Activated naive CD4-positive, alpha-beta T cell treated with anti-CD3 and anti-CD28 coated beads for 36 hours (primary cell): ENCODE measurements at regions of chrX and their contacts with region 1.

Region 1: DNA sequence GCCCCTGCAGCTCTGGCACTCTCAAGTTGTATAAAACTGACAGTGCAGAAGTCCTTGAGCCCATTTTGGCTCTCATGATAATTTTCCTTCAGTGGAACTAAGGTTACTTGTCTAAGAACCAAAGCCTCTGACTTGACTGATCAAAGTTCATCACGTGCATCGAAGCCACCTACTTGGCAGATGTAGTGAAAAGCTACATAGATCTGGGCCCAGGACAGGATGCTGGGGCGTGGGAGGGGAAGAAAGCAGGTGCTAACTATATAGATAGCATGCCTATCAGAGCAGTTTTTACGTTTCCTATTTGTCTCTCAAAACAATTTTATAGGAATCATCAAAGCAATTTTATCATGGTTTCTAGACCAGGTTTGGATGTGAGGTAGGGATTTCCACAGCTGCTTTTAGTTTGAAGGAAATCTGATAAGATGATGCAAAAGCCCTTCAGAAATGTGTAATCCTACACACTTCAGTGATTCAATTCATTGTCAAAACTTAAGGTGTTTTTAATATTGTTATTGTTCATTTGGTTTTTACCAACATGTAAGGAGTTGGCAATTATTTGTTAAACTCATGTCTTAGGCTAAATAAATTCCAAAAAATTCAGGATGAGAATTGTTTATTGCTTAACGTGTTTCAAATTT is 1.2 kb upstream of the CD40LG start:
- DNase-seq: peak; percentile 83
- H3K4me3 Mint-ChIP-seq: peak overlapping the region; percentile 96
- H3K27ac Mint-ChIP-seq: peak overlapping the region; percentile 100
- H3K4me1 Mint-ChIP-seq: peaks cover 54% of the 10 kb centered on the region
- H3K27me3 Mint-ChIP-seq: no peaks in the 10 kb centered on the region

Region 2: DNA sequence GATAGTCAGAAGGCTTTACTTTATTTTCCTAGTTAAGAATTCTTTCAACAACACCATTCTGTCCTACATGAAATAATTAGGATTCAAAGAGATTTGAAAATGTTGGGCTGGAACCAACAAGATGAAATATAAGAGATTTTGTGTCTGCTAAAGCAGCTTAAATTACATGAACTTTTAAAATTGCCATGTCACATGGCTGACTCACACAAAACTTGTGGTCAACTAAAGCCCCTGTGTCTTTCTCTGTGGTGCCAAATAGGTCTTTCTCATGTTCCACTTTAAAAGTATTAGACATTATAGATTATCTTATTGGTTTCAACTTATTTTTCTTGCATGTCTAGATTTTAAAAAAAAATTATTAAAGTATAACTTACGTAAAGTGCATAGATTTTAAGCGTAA is 560.2 kb before region 1 on chrX:
- CTCF ChIA-PET with region 1: no interaction called
- intact Hi-C with region 1: no loop called
- DNase-seq: no peak
- H3K4me3 Mint-ChIP-seq: no peak overlapping the region
- H3K27ac Mint-ChIP-seq: no peak overlapping the region
- H3K4me1 Mint-ChIP-seq: no peaks in the 10 kb centered on the region
- H3K27me3 Mint-ChIP-seq: no peaks in the 10 kb centered on the region

Region 3: DNA sequence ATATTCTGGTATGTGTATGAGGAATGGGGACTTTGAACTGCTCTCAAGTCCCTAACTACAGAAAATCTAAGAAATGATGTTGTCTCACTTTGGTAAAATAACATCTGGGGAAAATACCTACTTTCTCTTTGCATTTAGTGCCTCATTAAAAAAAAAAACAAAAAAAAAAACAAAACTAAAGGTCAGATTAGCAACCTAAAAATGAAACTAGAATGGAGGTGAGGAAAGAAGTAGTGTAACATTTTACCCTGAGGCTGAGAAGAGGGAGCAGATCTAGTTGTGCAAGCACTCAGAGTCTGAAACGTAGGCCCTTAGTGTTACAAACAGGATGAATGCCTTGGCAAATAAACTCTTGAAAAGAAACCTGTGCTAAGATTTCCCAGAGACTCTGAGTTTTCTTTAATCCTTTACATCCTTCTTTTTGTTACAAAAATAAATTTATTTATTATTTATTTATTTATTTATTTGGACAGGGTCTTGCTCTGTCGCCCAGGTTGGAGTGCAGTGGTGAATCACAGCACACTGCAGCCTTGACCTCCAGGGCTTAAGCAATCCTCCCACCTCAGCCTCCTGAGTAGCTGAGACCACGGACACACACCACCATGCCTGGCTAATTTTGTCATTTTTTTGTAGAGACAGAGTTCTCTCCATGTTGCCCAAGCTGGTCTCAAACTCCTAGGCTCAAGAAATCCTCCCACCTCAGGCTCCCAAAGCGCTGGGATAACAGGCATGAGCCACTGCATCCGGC is 58.5 kb before region 1 on chrX:
- CTCF ChIA-PET with region 1: no interaction called
- intact Hi-C with region 1: loop called (anchors 1 kb)
- DNase-seq: peak; percentile 37
- H3K4me3 Mint-ChIP-seq: no peak overlapping the region
- H3K27ac Mint-ChIP-seq: peak overlapping the region; percentile 86
- H3K4me1 Mint-ChIP-seq: peaks cover 63% of the 10 kb centered on the region
- H3K27me3 Mint-ChIP-seq: no peaks in the 10 kb centered on the region

Region 4: DNA sequence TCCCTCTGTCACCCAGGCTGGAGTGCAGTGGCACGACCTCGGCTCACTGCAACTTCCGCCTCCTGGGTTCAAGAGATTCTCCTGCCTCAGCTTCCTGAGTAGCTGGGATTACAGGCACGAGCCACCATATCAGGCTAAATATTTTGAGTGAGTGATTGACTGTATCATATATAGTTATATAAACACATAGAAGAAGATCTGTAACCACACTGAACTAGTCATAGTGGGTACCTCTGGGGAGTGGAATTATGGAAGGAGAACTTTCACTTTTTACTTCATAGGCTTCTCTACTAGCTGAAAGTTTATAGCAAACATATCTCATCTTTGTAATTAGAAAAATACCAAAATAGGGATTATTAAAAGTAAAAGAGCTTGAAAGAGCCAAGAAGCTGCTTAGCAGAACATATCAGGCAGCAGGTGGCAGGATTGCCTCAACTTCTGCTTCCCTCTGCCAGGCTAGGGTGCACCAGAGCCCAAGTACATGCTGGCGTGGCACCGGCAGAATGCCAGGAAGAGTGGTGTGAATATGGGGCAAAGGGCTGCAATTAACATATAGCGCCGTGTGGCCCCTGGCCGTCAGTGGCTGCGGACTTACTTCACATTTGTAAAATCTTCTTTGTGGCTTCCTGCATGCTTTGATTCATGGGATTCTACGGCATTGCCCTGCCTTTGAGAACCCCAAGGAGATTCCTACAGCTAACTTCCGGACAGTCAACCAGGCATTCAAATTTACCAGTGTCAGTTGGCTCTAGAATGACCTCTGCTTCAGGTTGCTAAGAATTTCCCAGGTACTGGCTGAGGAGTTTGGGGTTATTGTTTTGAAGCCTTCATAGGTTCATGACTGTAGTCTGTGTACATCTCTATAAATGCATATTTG is 38.2 kb before region 1 on chrX:
- CTCF ChIA-PET with region 1: interaction called, 3 read pairs
- intact Hi-C with region 1: loop called (anchors 1 kb)
- DNase-seq: peak; percentile 80
- H3K4me3 Mint-ChIP-seq: peak overlapping the region; percentile 46
- H3K27ac Mint-ChIP-seq: peak overlapping the region; percentile 79
- H3K4me1 Mint-ChIP-seq: peaks cover 54% of the 10 kb centered on the region
- H3K27me3 Mint-ChIP-seq: no peaks in the 10 kb centered on the region

Region 5: GRCh38 chrX:136616987-136617685 is 29.6 kb before region 1 on chrX:
- CTCF ChIA-PET with region 1: interaction called, 3 read pairs
- intact Hi-C with region 1: loop called (anchors 1 kb)
- DNase-seq: peak; percentile 54
- H3K4me3 Mint-ChIP-seq: peak overlapping the region; percentile 46
- H3K27ac Mint-ChIP-seq: peak overlapping the region; percentile 91
- H3K4me1 Mint-ChIP-seq: peaks cover 69% of the 10 kb centered on the region
- H3K27me3 Mint-ChIP-seq: no peaks in the 10 kb centered on the region

Region 6: GRCh38 chrX:136635235-136635634 is 11.5 kb before region 1 on chrX:
- CTCF ChIA-PET with region 1: interaction called, 3 read pairs
- intact Hi-C with region 1: loop called (anchors 1 kb)
- DNase-seq: peak; percentile 44
- H3K4me3 Mint-ChIP-seq: peak overlapping the region; percentile 62
- H3K27ac Mint-ChIP-seq: peak overlapping the region; percentile 93
- H3K4me1 Mint-ChIP-seq: peaks cover 86% of the 10 kb centered on the region
- H3K27me3 Mint-ChIP-seq: no peaks in the 10 kb centered on the region

Region 7: GRCh38 chrX:136658151-136658550 is 11.4 kb after region 1 on chrX:
- CTCF ChIA-PET with region 1: interaction called, 11 read pairs
- intact Hi-C with region 1: loop called (anchors 1 kb)
- DNase-seq: peak; percentile 34
- H3K4me3 Mint-ChIP-seq: peak overlapping the region; percentile 96
- H3K27ac Mint-ChIP-seq: peak overlapping the region; percentile 100
- H3K4me1 Mint-ChIP-seq: peaks cover 74% of the 10 kb centered on the region
- H3K27me3 Mint-ChIP-seq: no peaks in the 10 kb centered on the region

Region 8: DNA sequence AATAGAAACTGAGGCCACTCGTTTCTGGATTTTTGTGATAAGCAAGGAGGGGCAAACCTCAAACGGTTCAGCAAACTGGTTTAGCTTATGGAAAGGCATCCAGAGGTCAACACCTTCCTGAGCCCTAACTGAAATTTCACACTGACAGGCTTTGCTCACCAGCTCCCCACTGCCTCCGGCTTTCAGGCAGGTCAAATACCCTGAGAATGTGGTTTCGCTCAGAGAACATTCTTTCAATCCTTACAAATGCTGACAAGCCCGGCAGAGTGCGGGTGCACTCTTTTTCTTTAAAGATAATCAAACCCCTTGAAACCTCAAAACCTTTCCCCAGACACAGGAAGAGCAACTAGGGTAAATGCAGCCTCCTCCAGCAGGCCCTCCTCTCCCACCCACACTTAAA is 42.7 kb after region 1 on chrX:
- CTCF ChIA-PET with region 1: no interaction called
- intact Hi-C with region 1: loop called (anchors 1 kb)
- DNase-seq: peak; percentile 15
- H3K4me3 Mint-ChIP-seq: peak overlapping the region; percentile 42
- H3K27ac Mint-ChIP-seq: peak overlapping the region; percentile 82
- H3K4me1 Mint-ChIP-seq: peaks cover 64% of the 10 kb centered on the region
- H3K27me3 Mint-ChIP-seq: no peaks in the 10 kb centered on the region